Activated CD4-positive, alpha-beta T cell treated with anti-CD3 and anti-CD28 coated beads, Interleukin-2, amount 10 ng/mL, durations not matched to agents 24 days and 14 days (primary cell): ENCODE measurements at regions of chr17 and their contacts with region 1.

Region 1: DNA sequence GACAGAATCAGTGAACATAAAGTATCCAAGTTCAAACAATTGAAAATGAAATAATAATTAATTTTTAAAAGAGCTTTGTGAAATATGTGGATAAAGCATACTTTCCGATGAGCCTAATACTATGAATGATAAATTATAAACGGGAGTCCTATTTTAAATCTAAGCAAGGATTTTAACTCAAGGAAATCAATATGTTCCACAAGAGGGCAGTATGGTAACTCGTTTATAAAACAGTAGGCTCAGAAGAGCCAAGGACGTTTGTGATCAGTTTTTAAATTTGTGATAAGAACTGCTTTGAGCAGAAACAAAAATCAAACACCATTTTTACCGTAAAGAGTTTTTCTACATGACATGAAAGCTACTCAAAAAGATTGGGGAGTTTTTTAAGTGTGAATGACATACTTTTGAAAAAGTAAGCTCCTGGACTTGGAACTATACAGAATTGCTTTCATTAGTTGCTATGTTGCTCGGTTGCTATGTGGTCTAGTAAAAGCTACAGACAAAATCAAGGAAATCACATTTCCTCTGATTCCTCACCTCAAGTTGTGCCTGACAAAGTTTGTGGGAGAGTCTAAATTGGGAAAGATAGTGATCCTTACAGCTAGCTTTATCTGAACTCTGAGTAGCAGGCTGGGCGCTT is 11.8 kb upstream of the TEKT1 start:
- DNase-seq: no peak
- H3K4me3 Mint-ChIP-seq: no peak overlapping the region
- H3K27ac Mint-ChIP-seq: no peak overlapping the region
- H3K4me1 Mint-ChIP-seq: peaks cover 12% of the 10 kb centered on the region
- H3K27me3 Mint-ChIP-seq: peaks cover 51% of the 10 kb centered on the region

Region 2: DNA sequence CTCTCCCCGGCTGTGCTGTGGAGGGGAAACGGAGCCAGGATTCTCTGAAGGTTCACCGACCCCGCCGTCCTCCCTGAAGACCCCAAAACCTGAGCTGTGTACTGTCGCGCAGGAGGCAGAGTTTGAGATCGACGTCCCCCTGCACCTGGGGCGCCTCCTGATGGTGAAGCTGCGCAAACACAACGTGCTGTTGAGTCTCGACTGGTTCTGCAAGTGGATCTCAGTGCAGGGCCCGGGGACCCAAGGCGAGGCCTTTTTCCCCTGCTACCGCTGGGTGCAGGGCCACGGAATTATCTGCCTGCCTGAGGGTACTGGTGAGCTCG is 50.8 kb after region 1 on chr17:
- intact Hi-C with region 1: loop called (anchors 5 kb)
- DNase-seq: peak; percentile 71
- H3K4me3 Mint-ChIP-seq: no peak overlapping the region
- H3K27ac Mint-ChIP-seq: no peak overlapping the region
- H3K4me1 Mint-ChIP-seq: no peaks in the 10 kb centered on the region
- H3K27me3 Mint-ChIP-seq: peaks cover 42% of the 10 kb centered on the region

Region 3: DNA sequence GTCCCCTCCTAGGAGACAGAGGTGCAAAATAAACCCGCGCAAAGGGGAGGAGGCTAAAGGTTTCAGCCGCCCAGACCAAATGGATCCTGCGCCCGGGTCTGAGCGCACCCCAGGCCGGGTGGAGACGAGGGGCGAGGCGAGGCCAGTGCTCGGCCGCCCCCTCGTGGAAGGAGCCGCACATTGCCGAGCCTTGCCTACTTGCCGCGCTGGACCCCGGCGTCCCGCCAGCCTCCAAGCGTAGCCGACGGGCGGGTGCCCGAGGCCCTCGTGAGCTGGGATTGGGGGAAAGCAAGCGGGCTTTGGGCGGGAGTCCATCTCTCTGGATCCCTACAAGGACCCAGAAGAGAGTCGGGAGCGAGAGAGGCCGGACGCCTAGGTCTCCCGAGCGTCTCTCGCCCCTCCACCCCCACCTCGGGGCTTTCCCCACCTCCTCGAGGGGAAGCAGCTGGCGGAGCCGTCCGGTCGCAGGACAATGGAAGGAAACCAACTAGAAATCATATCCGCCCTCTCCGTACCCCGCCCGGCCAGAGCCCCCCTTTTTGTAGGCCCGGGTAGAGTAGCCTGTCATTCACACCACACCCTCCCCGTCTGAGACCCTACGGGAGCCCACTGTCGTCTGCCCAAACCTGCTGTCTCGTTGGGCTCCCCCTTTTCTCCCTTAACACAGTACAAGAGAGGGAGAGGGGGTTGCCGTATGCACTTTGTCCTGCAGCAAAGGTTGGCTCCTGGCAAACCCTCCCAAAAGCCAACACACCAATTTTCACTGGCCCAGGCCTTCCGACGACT is 178.8 kb after region 1 on chr17:
- intact Hi-C with region 1: no loop called
- DNase-seq: peak; percentile 95
- H3K4me3 Mint-ChIP-seq: peak overlapping the region; percentile 68
- H3K27ac Mint-ChIP-seq: peak overlapping the region; percentile 59
- H3K4me1 Mint-ChIP-seq: peaks cover 64% of the 10 kb centered on the region
- H3K27me3 Mint-ChIP-seq: no peaks in the 10 kb centered on the region